OCI-LY7 (cell line): ENCODE measurements at regions of chr4 and their contacts with region 1.

Region 1: GRCh38 chr4:55866973-55867574 is 13.6 kb downstream of the EXOC1 start:
- DNase-seq: peak; percentile 74
- H3K4me3 ChIP-seq: no peak overlapping the region
- H3K27ac ChIP-seq: no peak overlapping the region
- H3K4me1 ChIP-seq: no peaks in the 10 kb centered on the region
- CTCF ChIP-seq: peak; percentile 99

Region 2: DNA sequence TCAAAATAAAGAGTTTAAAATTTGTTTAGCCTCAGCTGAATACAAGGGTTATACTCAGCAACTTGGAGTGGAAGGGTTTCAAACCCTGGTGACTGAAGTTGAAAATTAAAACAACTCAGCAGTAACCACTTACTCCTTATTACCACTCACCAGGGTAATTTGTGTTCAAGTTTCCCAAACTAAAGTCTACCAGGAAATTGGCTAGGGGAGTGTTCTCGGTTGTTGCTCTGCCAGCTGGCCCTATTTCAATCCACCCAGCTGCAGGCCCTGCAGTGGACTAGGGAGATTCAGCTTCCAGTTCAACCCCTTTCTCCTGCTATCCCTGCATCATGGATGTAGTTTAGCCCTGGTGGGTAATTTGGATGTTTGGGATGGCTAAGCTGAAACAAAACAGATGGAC is 85.3 kb before region 1 on chr4:
- CTCF ChIA-PET with region 1: no interaction called
- POLR2A ChIA-PET with region 1: no interaction called
- intact Hi-C with region 1: no loop called
- DNase-seq: no peak
- H3K4me3 ChIP-seq: no peak overlapping the region
- H3K27ac ChIP-seq: no peak overlapping the region
- H3K4me1 ChIP-seq: no peaks in the 10 kb centered on the region
- CTCF ChIP-seq: no peak

Region 3: GRCh38 chr4:56301181-56302076 is 434.4 kb after region 1 on chr4:
- CTCF ChIA-PET with region 1: no interaction called
- POLR2A ChIA-PET with region 1: no interaction called
- intact Hi-C with region 1: loop called (anchors 10 kb)
- DNase-seq: peak; percentile 77
- H3K4me3 ChIP-seq: no peak overlapping the region
- H3K27ac ChIP-seq: no peak overlapping the region
- H3K4me1 ChIP-seq: no peaks in the 10 kb centered on the region
- CTCF ChIP-seq: peak; percentile 98